Breast epithelium (tissue), 4 donors: ENCODE measurements at regions of chr19 and their contacts with region 1.

Region 1: DNA sequence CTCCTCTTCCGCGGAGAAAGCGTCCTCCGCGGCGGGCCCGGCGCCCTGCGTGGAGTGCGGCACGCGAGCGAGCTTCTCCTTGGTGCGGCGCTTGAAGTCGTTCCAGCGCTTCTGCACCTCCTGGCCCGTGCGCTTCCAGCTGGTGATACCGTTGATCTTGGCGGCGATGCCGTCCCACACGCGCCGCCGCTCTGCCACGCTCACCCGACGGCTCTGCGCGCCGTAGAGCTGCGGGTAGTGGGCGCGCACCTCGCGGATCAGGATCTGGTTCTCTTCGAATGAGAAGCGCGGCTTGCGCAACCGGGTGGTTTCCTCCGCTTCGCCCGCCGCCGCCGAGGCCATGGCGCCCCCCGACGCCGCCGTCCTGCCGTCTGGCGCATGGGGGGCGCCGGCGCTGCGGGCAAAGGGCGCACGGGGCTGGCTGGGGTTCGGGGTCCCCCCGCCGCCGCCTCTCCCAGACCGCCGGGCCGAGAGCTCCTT is 941 bp downstream of the MYPOP start:
- DNase-seq: no peak
- H3K4me3 ChIP-seq: peak overlapping the region; percentile 59 to 79 (median 75)
- H3K27ac ChIP-seq: no peak overlapping the region
- H3K4me1 ChIP-seq: no peaks in the 10 kb centered on the region
- H3K27me3 ChIP-seq: no peaks in the 10 kb centered on the region
- CTCF ChIP-seq: no peak
- POLR2A ChIP-seq: no peak

Region 2: GRCh38 chr19:45927565-45928261 is 26.2 kb after region 1 on chr19:
- intact Hi-C with region 1: loop called (anchors 1 kb)
- DNase-seq: peak; percentile 86 to 87
- H3K4me3 ChIP-seq: peak overlapping the region in 1 of 3 donors; percentile 8
- H3K27ac ChIP-seq: no peak overlapping the region
- H3K4me1 ChIP-seq: no peaks in the 10 kb centered on the region
- H3K27me3 ChIP-seq: peaks cover 0 to 7% of the 10 kb centered on the region in 2 donors
- CTCF ChIP-seq: no peak
- POLR2A ChIP-seq: no peak